Transverse colon (tissue), 4 donors: ENCODE measurements at regions of chr15 and their contacts with region 1.

Region 1: GRCh38 chr15:63891079-63891767 is 57.5 kb upstream of the HERC1 start:
- DNase-seq: peak; percentile 86
- H3K4me3 ChIP-seq: no peak overlapping the region
- H3K27ac ChIP-seq: peak overlapping the region in 1 of 4 donors; percentile 19
- H3K4me1 ChIP-seq: peaks cover 0 to 17% (median 1%) of the 10 kb centered on the region in 4 donors
- H3K27me3 ChIP-seq: no peaks in the 10 kb centered on the region
- CTCF ChIP-seq: peak; percentile 84 to 93 (median 88)
- EP300 ChIP-seq: no peak
- POLR2A ChIP-seq: no peak

Region 2: GRCh38 chr15:62026487-62027262 is 1864.5 kb before region 1 on chr15:
- in situ Hi-C with region 1: no loop called
- intact Hi-C with region 1: loop called (anchors 5 kb)
- DNase-seq: no peak
- H3K4me3 ChIP-seq: no peak overlapping the region
- H3K27ac ChIP-seq: no peak overlapping the region
- H3K4me1 ChIP-seq: no peaks in the 10 kb centered on the region
- H3K27me3 ChIP-seq: no peaks in the 10 kb centered on the region
- CTCF ChIP-seq: no peak
- EP300 ChIP-seq: no peak
- POLR2A ChIP-seq: no peak

Region 3: GRCh38 chr15:63752075-63752684 is 139.0 kb before region 1 on chr15:
- in situ Hi-C with region 1: loop called (anchors 10 to 25 kb)
- intact Hi-C with region 1: loop called (anchors 5 kb)
- DNase-seq: peak; percentile 25
- H3K4me3 ChIP-seq: no peak overlapping the region
- H3K27ac ChIP-seq: peak overlapping the region; percentile 30 to 49 (median 38)
- H3K4me1 ChIP-seq: peaks cover 0 to 9% (median 3%) of the 10 kb centered on the region in 4 donors
- H3K27me3 ChIP-seq: no peaks in the 10 kb centered on the region
- CTCF ChIP-seq: peak; percentile 69 to 90 (median 75)
- EP300 ChIP-seq: no peak
- POLR2A ChIP-seq: no peak